ENCODE measurements at regions of chr3 and their contacts with region 1.

Region 1: GRCh38 chr3:16600780-16601539 is 4.3 kb downstream of the DAZL start:
- DNase-seq: peak; percentile 54 to 79 (median 68)
- ATAC-seq: peak; percentile 68
- H3K4me3 ChIP-seq: no peak overlapping the region
- H3K4me3 Mint-ChIP-seq: no peak overlapping the region
- H3K27ac ChIP-seq: no peak overlapping the region
- H3K27ac Mint-ChIP-seq: no peak overlapping the region
- H3K4me1 ChIP-seq: peaks cover 0 to 3% of the 10 kb centered on the region in 2 donors
- H3K4me1 Mint-ChIP-seq: peaks cover 5 to 23% (median 16%) of the 10 kb centered on the region in 7 donors
- H3K27me3 ChIP-seq: no peaks in the 10 kb centered on the region
- H3K27me3 Mint-ChIP-seq: peaks cover 0 to 54% (median 4%) of the 10 kb centered on the region in 5 donors

Region 2: DNA sequence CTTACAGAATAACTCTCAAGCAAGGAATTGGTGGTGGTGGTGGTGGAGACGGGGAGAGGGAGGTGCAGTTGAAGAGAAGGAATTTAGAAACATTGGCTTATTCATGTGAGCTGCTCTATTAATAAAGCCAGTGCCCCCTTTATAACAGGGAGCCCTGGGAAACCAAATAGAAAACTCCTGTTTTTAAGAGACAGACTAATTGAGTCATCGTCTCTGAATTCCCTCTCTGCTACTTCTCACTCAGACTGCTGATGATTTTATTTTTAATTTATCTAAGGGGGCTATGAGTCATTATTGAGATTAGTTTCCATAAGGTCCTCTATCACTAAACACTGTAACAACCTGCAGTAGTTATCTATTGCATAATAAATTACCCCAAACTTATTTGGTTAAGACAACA is 572.4 kb before region 1 on chr3:
- CTCF ChIA-PET with region 1: no interaction called
- POLR2A ChIA-PET with region 1: no interaction called
- intact Hi-C with region 1: no loop called
- DNase-seq: no peak
- ATAC-seq: no peak
- H3K4me3 ChIP-seq: no peak overlapping the region
- H3K4me3 Mint-ChIP-seq: no peak overlapping the region
- H3K27ac ChIP-seq: no peak overlapping the region
- H3K27ac Mint-ChIP-seq: no peak overlapping the region
- H3K4me1 ChIP-seq: no peaks in the 10 kb centered on the region
- H3K4me1 Mint-ChIP-seq: no peaks in the 10 kb centered on the region
- H3K27me3 ChIP-seq: no peaks in the 10 kb centered on the region
- H3K27me3 Mint-ChIP-seq: peaks cover 10 to 20% (median 16%) of the 10 kb centered on the region in 5 donors

Region 3: GRCh38 chr3:16808393-16809107 is 207.6 kb after region 1 on chr3:
- CTCF ChIA-PET with region 1: interaction called, 3 read pairs
- POLR2A ChIA-PET with region 1: no interaction called
- intact Hi-C with region 1: loop called in 1 of 2 experiments (anchors 5 kb)
- DNase-seq: peak in 2 of 9 donors; percentile 8 to 16
- ATAC-seq: no peak
- H3K4me3 ChIP-seq: no peak overlapping the region
- H3K4me3 Mint-ChIP-seq: no peak overlapping the region
- H3K27ac ChIP-seq: no peak overlapping the region
- H3K27ac Mint-ChIP-seq: no peak overlapping the region
- H3K4me1 ChIP-seq: peaks cover 13 to 14% of the 10 kb centered on the region in 2 donors
- H3K4me1 Mint-ChIP-seq: peaks cover 8 to 36% (median 25%) of the 10 kb centered on the region in 7 donors
- H3K27me3 ChIP-seq: no peaks in the 10 kb centered on the region
- H3K27me3 Mint-ChIP-seq: peaks cover 0 to 43% (median 0%) of the 10 kb centered on the region in 5 donors

Region 4: GRCh38 chr3:17032407-17033034 is 431.6 kb after region 1 on chr3:
- CTCF ChIA-PET with region 1: no interaction called
- POLR2A ChIA-PET with region 1: no interaction called
- intact Hi-C with region 1: loop called (anchors 2 to 5 kb)
- DNase-seq: no peak
- ATAC-seq: no peak
- H3K4me3 ChIP-seq: no peak overlapping the region
- H3K4me3 Mint-ChIP-seq: peak overlapping the region in 1 of 10 donors; percentile 11
- H3K27ac ChIP-seq: no peak overlapping the region
- H3K27ac Mint-ChIP-seq: peak overlapping the region in 7 of 9 donors; percentile 4 to 60 (median 17)
- H3K4me1 ChIP-seq: peaks cover 0 to 24% of the 10 kb centered on the region in 2 donors
- H3K4me1 Mint-ChIP-seq: peaks cover 48 to 90% (median 80%) of the 10 kb centered on the region in 7 donors
- H3K27me3 ChIP-seq: no peaks in the 10 kb centered on the region
- H3K27me3 Mint-ChIP-seq: no peaks in the 10 kb centered on the region

Region 5: DNA sequence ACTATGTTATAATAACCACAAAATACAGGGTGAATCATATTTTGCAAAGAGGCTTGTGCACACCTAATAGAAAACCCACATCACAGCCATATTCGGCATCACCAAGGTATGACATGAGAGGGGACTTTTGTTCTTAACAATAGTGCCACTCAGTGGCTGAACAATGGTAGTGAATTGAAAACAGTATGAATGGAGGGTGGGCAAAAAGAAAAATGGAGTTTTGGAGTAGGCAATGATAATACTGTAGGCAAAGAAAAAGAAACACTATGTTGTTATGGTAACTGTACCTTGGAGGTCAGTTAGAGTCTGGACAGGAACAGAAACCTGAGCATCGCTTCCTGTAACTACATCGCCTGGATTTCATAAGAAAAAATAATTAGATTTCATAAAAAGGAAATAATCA is 632.4 kb after region 1 on chr3:
- CTCF ChIA-PET with region 1: interaction called, 54 read pairs
- POLR2A ChIA-PET with region 1: no interaction called
- intact Hi-C with region 1: loop called (anchors 1 kb)
- DNase-seq: peak in 8 of 9 donors; percentile 22 to 73 (median 58)
- ATAC-seq: peak; percentile 97
- H3K4me3 ChIP-seq: no peak overlapping the region
- H3K4me3 Mint-ChIP-seq: peak overlapping the region in 7 of 10 donors; percentile 2 to 56 (median 50)
- H3K27ac ChIP-seq: no peak overlapping the region
- H3K27ac Mint-ChIP-seq: peak overlapping the region in 5 of 9 donors; percentile 4 to 73 (median 31)
- H3K4me1 ChIP-seq: peaks cover 0 to 18% of the 10 kb centered on the region in 2 donors
- H3K4me1 Mint-ChIP-seq: peaks cover 5 to 30% (median 27%) of the 10 kb centered on the region in 7 donors
- H3K27me3 ChIP-seq: no peaks in the 10 kb centered on the region
- H3K27me3 Mint-ChIP-seq: no peaks in the 10 kb centered on the region

Region 6: GRCh38 chr3:17412950-17413530 is 812.1 kb after region 1 on chr3:
- CTCF ChIA-PET with region 1: interaction called, 22 read pairs
- POLR2A ChIA-PET with region 1: no interaction called
- intact Hi-C with region 1: loop called (anchors 1 kb)
- DNase-seq: peak in 6 of 9 donors; percentile 21 to 53 (median 41)
- ATAC-seq: peak; percentile 69
- H3K4me3 ChIP-seq: no peak overlapping the region
- H3K4me3 Mint-ChIP-seq: no peak overlapping the region
- H3K27ac ChIP-seq: no peak overlapping the region
- H3K27ac Mint-ChIP-seq: peak overlapping the region in 1 of 9 donors; percentile 51
- H3K4me1 ChIP-seq: no peaks in the 10 kb centered on the region
- H3K4me1 Mint-ChIP-seq: no peaks in the 10 kb centered on the region
- H3K27me3 ChIP-seq: no peaks in the 10 kb centered on the region
- H3K27me3 Mint-ChIP-seq: no peaks in the 10 kb centered on the region

Region 7: DNA sequence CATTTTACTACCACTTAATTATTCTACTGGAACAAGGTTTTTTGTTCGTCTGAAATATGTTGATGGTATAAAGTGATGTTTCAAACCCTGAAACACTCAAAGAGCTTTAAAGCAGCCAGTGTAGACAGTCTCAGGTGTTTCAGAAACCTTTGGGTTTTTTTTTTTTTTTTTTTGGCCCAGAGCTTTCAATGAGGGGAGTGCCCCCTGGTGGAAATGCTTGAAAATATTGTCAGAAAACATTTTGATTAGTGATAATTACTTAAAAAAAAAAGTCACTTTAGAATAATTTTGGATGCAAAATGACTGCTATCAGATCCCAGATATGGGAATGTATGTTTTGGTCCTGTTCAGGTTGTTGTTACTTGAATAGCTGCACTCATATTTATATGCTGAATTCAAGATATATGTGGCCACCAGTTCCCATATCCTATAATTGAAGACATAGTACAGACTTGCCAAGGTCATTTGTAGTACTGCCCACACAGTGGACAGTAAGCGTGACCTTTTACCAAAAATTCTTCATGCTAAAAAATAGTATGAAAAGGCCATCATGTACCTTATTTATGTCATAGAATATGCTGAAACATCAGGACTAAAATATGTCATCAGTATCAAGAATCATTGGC is 1788.3 kb after region 1 on chr3:
- CTCF ChIA-PET with region 1: no interaction called
- POLR2A ChIA-PET with region 1: no interaction called
- intact Hi-C with region 1: loop called in 1 of 2 experiments (anchors 1 kb)
- DNase-seq: peak in 7 of 9 donors; percentile 32 to 63 (median 53)
- ATAC-seq: peak; percentile 71
- H3K4me3 ChIP-seq: no peak overlapping the region
- H3K4me3 Mint-ChIP-seq: peak overlapping the region in 8 of 10 donors; percentile 4 to 58 (median 28)
- H3K27ac ChIP-seq: peak overlapping the region; percentile 17
- H3K27ac Mint-ChIP-seq: peak overlapping the region in 7 of 9 donors; percentile 2 to 79 (median 47)
- H3K4me1 ChIP-seq: peaks cover 0 to 41% of the 10 kb centered on the region in 2 donors
- H3K4me1 Mint-ChIP-seq: peaks cover 21 to 95% (median 88%) of the 10 kb centered on the region in 7 donors
- H3K27me3 ChIP-seq: no peaks in the 10 kb centered on the region
- H3K27me3 Mint-ChIP-seq: no peaks in the 10 kb centered on the region

Measured in naive thymus-derived CD4-positive, alpha-beta T cell (primary cell).